Activated CD8-positive, alpha-beta T cell treated with anti-CD3 and anti-CD28 coated beads for 36 hours (primary cell): ENCODE measurements at regions of chr22 and their contacts with region 1.

Region 1: DNA sequence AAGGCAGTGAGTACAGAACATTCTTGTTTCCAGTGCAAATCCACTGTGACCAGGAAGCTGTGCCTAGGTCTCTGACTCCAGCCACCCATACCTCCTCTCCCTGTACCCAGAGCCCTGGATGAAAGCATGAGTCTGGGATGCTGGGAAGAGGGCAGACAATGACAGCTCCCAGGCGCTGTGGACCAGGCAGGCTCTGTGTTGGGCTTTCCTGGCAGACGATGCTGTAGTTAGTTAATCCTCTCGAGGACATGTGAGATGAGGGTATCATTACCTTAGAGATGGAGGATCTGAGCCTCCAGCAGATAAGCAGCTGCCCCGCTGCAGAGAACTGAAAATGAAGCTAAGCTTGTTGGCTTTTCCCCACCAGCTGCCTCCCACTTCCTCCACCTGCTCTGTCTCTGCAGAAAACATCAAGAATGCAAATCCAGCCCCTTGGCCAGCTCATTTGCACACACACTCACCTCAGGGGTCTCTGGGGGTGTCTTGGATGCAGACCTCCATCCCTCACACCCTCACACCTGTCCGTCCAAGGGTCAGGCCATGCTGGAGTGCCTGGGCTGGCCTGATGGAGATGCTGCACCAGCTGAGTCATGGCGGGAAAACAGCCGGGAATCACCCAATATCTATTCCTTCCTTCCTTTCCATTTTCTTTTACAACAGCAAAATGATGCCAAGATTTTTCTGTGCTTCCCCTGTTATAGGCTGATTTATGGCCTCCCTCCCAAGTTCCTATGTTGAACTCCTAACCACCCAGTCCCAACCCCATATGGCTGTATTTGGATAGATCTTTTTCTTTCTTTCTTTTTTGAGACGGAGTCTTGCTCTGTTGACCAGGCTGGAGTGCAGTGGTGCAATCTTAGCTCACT is 94.9 kb upstream of the SEPTIN5 start:
- DNase-seq: no peak
- ATAC-seq: no peak
- H3K4me3 Mint-ChIP-seq: no peak overlapping the region
- H3K27ac Mint-ChIP-seq: no peak overlapping the region
- H3K4me1 Mint-ChIP-seq: peaks cover 12% of the 10 kb centered on the region
- H3K27me3 Mint-ChIP-seq: no peaks in the 10 kb centered on the region
- CTCF ChIP-seq: no peak

Region 2: DNA sequence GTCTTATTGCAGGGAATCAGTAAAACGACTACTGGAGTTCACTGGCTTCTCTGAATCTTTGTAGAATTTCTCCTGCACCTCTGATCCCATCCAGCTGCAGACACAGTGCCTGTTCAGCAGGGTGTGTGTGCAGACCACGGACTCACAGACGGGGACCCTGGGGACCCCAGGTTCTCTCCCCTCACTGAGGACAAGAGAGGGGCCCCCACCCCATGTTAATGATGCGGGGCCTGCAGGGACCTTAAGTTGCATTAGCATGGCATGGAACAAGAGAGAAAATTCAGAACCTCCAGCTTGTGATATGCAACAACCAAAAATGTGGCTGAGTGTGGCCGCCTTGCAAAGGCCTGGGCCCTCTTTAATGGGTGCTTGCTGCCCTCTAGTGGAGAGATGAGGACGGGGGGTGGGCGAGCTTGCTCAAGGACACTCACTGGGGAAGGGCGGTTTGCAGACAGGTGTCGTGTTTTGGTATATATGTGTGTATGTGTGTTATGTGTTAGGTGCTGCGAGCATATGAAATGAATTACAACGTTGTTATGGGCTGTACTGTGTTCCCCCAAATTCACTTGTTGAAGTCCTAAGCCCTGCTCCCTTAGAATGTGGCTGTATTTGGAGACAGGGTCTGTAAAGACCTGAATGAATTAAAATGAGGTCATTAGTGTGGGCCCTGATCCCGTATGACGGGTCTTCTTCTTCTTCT is 10.5 kb after region 1 on chr22:
- CTCF ChIA-PET with region 1: interaction called, 19 read pairs
- POLR2A ChIA-PET with region 1: no interaction called
- intact Hi-C with region 1: no loop called
- DNase-seq: peak; percentile 92
- ATAC-seq: peak; percentile 94
- H3K4me3 Mint-ChIP-seq: no peak overlapping the region
- H3K27ac Mint-ChIP-seq: no peak overlapping the region
- H3K4me1 Mint-ChIP-seq: no peaks in the 10 kb centered on the region
- H3K27me3 Mint-ChIP-seq: peaks cover 4% of the 10 kb centered on the region
- CTCF ChIP-seq: peak; percentile 91

Region 3: DNA sequence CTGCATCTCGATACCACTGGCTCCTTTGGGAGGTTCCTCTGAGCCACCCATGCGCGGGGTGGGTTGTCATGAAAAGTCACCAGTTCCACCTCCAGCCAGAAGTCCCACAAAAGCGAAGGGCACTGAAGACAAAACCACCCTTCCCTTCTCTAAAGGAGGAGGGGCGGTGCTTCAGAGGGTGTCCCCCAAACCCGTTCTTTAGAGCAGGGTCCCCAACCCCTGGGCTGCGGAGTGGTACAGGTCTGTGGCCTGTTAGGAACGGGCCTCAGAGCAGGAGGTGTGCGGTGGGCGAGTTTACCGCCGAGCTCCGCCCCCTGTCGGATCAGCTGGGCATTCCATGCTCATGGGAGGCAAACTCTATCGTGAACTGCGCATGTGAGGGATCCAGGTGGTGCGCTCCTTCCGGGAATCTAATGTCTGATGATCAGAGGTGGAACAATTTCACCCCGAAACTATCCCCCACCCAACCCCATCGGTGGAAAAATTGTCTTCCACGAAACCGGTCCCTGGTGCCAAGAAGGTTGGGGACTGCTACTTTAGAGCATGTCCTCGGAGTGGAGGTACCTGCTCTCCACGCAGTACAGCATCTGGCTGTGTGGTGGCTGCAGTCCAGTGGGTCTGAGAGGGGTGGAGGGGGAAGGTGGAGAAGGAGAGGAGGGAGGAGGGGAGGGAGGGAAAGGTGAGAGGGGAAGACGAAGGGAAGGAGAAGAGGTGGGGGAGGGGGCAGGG is 22.0 kb after region 1 on chr22:
- CTCF ChIA-PET with region 1: no interaction called
- POLR2A ChIA-PET with region 1: no interaction called
- intact Hi-C with region 1: no loop called
- DNase-seq: no peak
- ATAC-seq: no peak
- H3K4me3 Mint-ChIP-seq: no peak overlapping the region
- H3K27ac Mint-ChIP-seq: no peak overlapping the region
- H3K4me1 Mint-ChIP-seq: no peaks in the 10 kb centered on the region
- H3K27me3 Mint-ChIP-seq: peaks cover 9% of the 10 kb centered on the region
- CTCF ChIP-seq: no peak